ENCODE measurements at regions of chr12 and their contacts with region 1.

Region 1: DNA sequence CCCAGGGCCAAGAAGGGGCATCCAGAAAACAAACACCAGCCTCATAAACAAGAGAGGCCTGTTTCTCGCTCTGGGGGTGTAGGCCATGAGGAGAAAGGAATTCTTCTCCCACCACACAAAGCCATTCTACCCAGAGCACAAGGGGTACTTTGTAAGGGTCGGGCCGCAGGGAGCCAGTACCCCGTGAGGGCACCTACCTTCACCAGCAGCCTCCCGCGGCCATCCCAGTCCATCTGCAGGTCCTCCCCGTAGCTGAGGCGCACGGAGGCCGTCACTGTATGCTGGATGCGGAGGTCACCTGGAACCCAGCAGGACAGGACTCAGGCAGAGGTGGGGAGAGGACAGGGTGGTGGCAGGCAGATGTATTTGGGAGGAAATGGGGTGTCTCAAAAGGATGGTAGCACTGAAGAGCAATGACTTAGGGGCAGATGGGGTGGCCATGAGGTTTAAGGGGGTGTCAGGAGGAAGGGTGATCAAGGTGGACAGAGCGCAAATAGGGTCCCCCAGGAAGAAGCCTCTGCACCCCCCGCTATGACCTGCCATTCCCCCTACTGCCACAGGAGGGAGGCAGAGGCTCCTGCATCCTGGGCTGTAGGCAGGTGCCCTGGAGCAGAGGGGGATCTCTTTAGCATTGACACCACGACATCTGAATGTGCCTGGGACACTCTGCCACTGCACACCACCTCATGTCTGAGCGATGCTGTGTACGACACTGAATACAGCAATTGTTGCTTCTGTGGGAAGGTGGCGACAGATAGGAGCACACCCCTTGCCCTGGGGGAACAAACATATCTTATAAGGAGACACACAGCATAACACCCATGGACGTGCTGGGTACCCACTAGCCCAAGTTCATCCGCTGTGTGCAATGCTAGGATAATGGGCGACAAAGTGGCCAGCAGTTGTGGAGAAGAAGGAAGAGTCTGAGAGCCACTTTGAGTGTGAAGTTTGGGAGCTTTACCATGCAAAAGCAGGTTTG is 61.4 kb downstream of the VWF start:
- DNase-seq: peak; percentile 53 to 69 (median 68)
- ATAC-seq: peak; percentile 84
- H3K4me3 ChIP-seq: no peak overlapping the region
- H3K4me1 ChIP-seq: no peaks in the 10 kb centered on the region
- CTCF ChIP-seq: peak; percentile 88

Region 2: DNA sequence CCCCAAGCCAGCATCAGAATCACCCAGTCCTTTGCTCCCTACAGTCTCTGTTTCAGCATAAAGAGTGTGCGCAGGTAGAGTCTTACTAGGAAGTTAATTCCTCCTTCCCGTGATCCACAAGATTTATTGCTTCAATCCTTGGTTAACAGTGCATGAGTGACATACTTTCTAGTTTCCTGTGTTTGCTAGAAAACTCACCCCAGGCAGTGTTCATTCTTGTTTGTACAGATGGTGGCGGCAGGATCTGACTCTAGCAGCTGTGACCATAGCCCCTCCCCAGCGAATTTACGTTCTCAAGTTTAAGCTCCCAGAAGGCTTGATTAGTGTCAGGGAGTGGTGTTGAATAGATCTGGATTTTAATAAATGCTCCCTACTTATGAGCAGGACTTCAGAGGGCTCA is 42.1 kb before region 1 on chr12:
- intact Hi-C with region 1: no loop called
- DNase-seq: peak in 1 of 3 donors; percentile 8
- ATAC-seq: peak; percentile 66
- H3K4me3 ChIP-seq: no peak overlapping the region
- H3K4me1 ChIP-seq: no peaks in the 10 kb centered on the region
- CTCF ChIP-seq: no peak

Region 3: GRCh38 chr12:6104027-6104426 is 41.0 kb after region 1 on chr12:
- intact Hi-C with region 1: no loop called
- DNase-seq: no peak
- ATAC-seq: no peak
- H3K4me3 ChIP-seq: no peak overlapping the region
- H3K4me1 ChIP-seq: no peaks in the 10 kb centered on the region
- CTCF ChIP-seq: no peak

Region 4: DNA sequence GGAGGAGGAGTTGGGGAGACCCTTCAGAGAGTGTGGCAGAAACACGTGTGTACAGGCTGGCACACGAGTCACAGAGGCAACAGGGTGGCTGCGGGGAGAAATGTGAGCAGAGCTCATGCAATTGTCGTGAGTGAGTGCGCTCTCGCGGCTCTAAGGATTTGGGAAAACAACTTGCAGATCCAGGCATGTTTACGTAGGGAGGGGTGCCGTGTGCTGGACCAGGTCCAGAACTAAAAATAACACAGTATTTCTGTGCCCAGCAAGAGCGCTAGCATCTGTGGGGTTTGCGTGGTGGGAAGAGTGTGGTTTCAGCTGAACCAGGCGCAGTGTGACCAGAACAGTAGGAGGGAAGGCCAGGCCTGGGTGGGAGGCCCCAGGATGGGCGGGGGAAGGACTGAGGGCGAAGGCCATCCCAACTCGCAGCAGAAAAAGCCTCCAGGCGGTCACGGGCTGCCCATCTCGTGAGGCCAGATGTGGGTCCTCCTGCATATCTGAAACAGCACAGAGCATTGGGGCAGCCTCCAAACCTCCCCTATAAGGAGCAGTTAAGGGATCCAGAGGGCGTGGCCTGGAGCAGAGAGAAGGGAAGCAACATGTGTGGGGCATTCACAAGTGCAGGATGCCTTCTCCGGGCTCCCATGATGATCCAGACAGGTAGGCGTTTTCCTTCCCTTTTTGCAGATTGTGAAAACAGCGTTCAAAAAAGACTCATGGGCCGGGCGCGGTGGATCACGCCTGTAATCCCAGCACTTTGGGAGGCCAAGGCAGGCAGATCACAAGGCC is 119.3 kb after region 1 on chr12:
- intact Hi-C with region 1: loop called (anchors 10 kb)
- DNase-seq: peak in 2 of 3 donors; percentile 67 to 80
- ATAC-seq: peak; percentile 41
- H3K4me3 ChIP-seq: no peak overlapping the region
- H3K4me1 ChIP-seq: peaks cover 23% of the 10 kb centered on the region
- CTCF ChIP-seq: no peak

Region 5: DNA sequence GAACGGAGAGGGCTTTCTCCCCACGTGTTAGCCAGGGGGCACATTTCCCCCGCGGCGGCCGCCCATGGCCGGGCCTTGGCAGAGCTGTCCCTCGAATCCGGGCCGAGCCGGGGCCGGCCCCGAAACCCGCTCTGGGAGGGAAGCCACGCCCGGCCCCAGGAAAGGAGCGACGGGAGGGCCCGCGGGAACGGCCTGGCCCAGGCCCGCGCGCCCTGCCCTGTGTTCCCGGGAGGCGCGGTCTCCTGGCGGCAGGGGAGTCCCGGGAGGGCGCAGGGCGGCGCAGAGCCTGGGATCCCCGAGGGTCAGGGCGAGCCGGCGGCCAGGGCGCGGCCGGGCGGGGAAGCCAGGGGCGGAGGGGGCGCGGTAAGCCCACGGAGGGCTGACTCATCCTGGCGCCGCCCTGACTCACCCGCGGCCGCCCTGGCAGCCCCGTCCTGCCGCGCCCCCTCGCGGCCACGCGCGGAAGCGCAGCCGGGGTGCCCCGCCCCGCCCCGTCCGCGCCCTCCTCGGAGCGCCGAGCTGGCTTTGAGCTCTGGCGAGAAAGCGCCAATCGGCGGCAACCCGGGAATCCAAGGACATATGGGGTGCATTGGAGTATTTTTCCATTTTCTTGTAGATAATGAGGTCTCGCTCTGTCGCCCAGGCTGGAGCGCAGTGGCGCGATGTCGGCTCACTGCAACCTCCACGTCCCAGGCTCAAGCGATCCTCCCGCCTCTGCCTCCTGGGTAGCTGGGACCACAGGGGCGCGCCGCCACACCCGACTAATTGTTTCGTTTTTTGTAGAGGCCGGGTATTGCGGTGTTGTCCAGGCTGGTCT is 215.6 kb after region 1 on chr12:
- intact Hi-C with region 1: loop called (anchors 5 kb)
- DNase-seq: peak; percentile 91 to 97 (median 93)
- ATAC-seq: peak; percentile 91
- H3K4me3 ChIP-seq: no peak overlapping the region
- H3K4me1 ChIP-seq: peaks cover 26% of the 10 kb centered on the region
- CTCF ChIP-seq: peak; percentile 96

Region 6: GRCh38 chr12:6764011-6764828 is 701.2 kb after region 1 on chr12:
- intact Hi-C with region 1: no loop called
- DNase-seq: peak; percentile 83 to 92 (median 86)
- ATAC-seq: peak; percentile 80
- H3K4me3 ChIP-seq: no peak overlapping the region
- H3K4me1 ChIP-seq: peaks cover 34% of the 10 kb centered on the region
- CTCF ChIP-seq: no peak

Measured in mucosa of descending colon (tissue), 3 donors.